Tibial artery (tissue), 4 donors: ENCODE measurements at regions of chr14 and their contacts with region 1.

Region 1: GRCh38 chr14:64478634-64479250 is 13.4 kb downstream of the AKAP5 start:
- DNase-seq: no peak
- H3K4me3 ChIP-seq: no peak overlapping the region
- H3K27ac ChIP-seq: no peak overlapping the region
- H3K4me1 ChIP-seq: no peaks in the 10 kb centered on the region
- H3K27me3 ChIP-seq: no peaks in the 10 kb centered on the region
- CTCF ChIP-seq: peak; percentile 46 to 52

Region 2: DNA sequence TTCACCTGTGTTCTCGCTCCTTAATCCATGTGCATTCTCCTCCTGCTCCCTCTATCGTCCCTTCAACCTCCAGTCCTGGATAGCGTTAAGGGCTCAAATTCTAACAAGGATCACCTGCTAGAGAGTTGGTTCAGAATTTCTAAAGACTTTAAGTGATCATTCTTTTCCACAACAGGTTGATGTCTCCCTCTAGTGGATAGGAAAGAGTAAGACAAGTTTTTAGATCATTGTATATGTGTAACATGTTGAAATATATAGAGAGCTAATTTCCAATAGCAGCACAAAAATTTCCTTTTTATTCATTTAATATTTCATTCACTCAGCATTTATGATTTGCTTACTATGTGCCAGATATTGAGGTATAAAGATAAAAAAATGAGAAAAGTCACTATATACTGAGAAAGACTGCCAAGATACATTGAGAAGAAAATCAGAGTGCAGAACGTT is 175.2 kb before region 1 on chr14:
- intact Hi-C with region 1: no loop called
- DNase-seq: no peak
- H3K4me3 ChIP-seq: no peak overlapping the region
- H3K27ac ChIP-seq: no peak overlapping the region
- H3K4me1 ChIP-seq: no peaks in the 10 kb centered on the region
- H3K27me3 ChIP-seq: no peaks in the 10 kb centered on the region
- CTCF ChIP-seq: peak; percentile 70 to 80

Region 3: DNA sequence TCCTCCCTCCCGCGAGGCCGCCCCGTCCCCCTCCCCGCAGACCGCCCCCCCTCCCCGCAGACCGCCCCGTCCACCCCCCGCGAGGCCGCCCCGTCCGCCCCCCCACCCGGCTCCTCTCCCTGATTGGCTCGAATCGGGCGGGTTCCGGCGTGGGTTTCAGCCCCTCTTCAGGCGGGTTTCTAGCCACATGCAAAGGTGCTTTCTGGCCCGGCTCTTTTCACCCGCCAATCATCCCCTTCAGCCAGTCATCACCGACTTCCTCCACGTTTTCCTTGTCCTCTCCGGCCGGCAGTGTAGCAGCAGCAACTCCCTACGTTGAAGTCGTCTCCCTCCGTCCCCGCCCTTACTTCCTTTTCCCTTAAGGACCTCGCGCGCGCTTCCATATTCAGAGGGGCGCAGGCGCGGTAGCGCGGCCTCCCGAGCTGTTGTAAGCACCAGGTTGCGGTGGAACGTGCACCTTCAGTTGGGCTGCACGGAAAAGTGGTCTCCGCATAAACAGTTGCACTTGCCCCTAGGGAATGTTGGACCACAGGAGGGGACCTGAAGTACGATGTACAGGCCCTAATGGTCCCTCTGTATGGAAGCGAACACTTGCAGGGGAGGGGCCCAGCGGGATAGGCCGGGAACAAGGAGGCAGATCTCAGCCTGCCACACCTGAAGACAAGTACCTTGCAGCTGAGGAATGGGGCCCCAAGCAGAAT is 140.0 kb before region 1 on chr14:
- intact Hi-C with region 1: loop called (anchors 5 kb)
- DNase-seq: peak; percentile 96 to 98
- H3K4me3 ChIP-seq: peak overlapping the region; percentile 82 to 89
- H3K27ac ChIP-seq: peak overlapping the region; percentile 82 to 89
- H3K4me1 ChIP-seq: peaks cover 0 to 15% (median 0%) of the 10 kb centered on the region in 4 donors
- H3K27me3 ChIP-seq: no peaks in the 10 kb centered on the region
- CTCF ChIP-seq: no peak

Region 4: DNA sequence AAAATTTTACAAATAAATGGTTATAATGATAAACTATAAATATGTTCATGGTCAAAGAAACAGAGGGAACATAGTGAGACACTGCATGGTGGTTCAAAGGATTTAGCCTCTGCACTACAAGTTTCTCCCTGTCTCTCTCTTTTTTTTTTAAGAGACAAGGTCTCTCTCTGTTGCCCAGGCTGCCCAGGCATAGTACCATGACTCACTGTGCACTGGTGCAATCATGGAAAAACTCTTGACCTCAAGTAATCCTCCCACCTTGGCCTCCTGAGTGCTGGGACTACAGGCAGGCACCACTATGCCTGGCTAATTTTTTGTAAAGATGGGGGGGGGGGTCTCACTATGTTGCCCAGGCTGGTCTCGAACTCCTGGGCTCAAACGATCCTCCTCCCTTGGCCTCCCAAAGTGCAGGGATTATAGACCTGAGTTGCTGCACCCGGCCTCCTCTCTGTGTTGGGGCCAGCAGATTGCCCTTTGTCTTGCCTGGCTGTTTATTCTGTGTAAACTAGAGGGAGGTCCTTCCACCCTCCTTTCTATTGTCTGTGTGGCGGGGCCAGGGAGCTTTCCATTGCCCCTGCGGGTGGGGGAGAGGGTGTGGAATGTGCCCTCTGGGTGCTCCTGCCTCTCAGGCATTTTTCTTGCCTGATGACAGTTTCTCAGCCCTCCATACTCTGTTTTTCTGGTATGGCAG is 68.5 kb before region 1 on chr14:
- intact Hi-C with region 1: no loop called
- DNase-seq: no peak
- H3K4me3 ChIP-seq: no peak overlapping the region
- H3K27ac ChIP-seq: peak overlapping the region; percentile 22 to 61
- H3K4me1 ChIP-seq: peaks cover 0 to 41% (median 16%) of the 10 kb centered on the region in 4 donors
- H3K27me3 ChIP-seq: no peaks in the 10 kb centered on the region
- CTCF ChIP-seq: no peak

Region 5: GRCh38 chr14:64434528-64434927 is 44.2 kb before region 1 on chr14:
- intact Hi-C with region 1: loop called (anchors 5 kb)
- DNase-seq: no peak
- H3K4me3 ChIP-seq: no peak overlapping the region
- H3K27ac ChIP-seq: no peak overlapping the region
- H3K4me1 ChIP-seq: peaks cover 0 to 25% (median 8%) of the 10 kb centered on the region in 4 donors
- H3K27me3 ChIP-seq: no peaks in the 10 kb centered on the region
- CTCF ChIP-seq: no peak

Region 6: GRCh38 chr14:64465831-64466556 is 12.7 kb before region 1 on chr14:
- intact Hi-C with region 1: loop called (anchors 1 kb)
- DNase-seq: no peak
- H3K4me3 ChIP-seq: peak overlapping the region; percentile 64 to 69
- H3K27ac ChIP-seq: peak overlapping the region; percentile 78 to 79
- H3K4me1 ChIP-seq: peaks cover 0 to 19% (median 7%) of the 10 kb centered on the region in 4 donors
- H3K27me3 ChIP-seq: no peaks in the 10 kb centered on the region
- CTCF ChIP-seq: peak; percentile 19 to 40

Region 7: GRCh38 chr14:65676361-65676998 is 1197.7 kb after region 1 on chr14:
- intact Hi-C with region 1: no loop called
- DNase-seq: no peak
- H3K4me3 ChIP-seq: no peak overlapping the region
- H3K27ac ChIP-seq: no peak overlapping the region
- H3K4me1 ChIP-seq: no peaks in the 10 kb centered on the region
- H3K27me3 ChIP-seq: no peaks in the 10 kb centered on the region
- CTCF ChIP-seq: no peak